ENCODE measurements at regions of chr2 and their contacts with region 1.

Region 1: GRCh38 chr2:152566728-152567069 is 150.6 kb downstream of the PRPF40A start:
- DNase-seq: no peak
- H3K4me3 ChIP-seq: no peak overlapping the region
- H3K4me3 Mint-ChIP-seq: no peak overlapping the region
- H3K27ac Mint-ChIP-seq: no peak overlapping the region
- H3K4me1 ChIP-seq: no peaks in the 10 kb centered on the region
- H3K4me1 Mint-ChIP-seq: no peaks in the 10 kb centered on the region
- H3K27me3 ChIP-seq: no peaks in the 10 kb centered on the region
- H3K27me3 Mint-ChIP-seq: no peaks in the 10 kb centered on the region
- CTCF ChIP-seq: no peak

Region 2: GRCh38 chr2:152627351-152627957 is 60.8 kb after region 1 on chr2:
- CTCF ChIA-PET with region 1: no interaction called
- POLR2A ChIA-PET with region 1: no interaction called
- intact Hi-C with region 1: loop called (anchors 5 kb)
- DNase-seq: peak in 1 of 2 experiments; percentile 19
- H3K4me3 ChIP-seq: no peak overlapping the region
- H3K4me3 Mint-ChIP-seq: no peak overlapping the region
- H3K27ac Mint-ChIP-seq: no peak overlapping the region
- H3K4me1 ChIP-seq: peaks cover 7% of the 10 kb centered on the region
- H3K4me1 Mint-ChIP-seq: peaks cover 10% of the 10 kb centered on the region
- H3K27me3 ChIP-seq: no peaks in the 10 kb centered on the region
- H3K27me3 Mint-ChIP-seq: no peaks in the 10 kb centered on the region
- CTCF ChIP-seq: peak; percentile 50 to 57